ENCODE measurements at regions of chr7 and their contacts with region 1.

Region 1: GRCh38 chr7:127598318-127598717 is 4.8 kb downstream of the FSCN3 start:
- DNase-seq: no peak
- H3K4me3 ChIP-seq: no peak overlapping the region
- H3K27ac ChIP-seq: no peak overlapping the region
- H3K4me1 ChIP-seq: no peaks in the 10 kb centered on the region
- H3K27me3 ChIP-seq: no peaks in the 10 kb centered on the region
- CTCF ChIP-seq: peak in 2 of 6 experiments; percentile 14 to 20
- POLR2A ChIP-seq: no peak

Region 2: DNA sequence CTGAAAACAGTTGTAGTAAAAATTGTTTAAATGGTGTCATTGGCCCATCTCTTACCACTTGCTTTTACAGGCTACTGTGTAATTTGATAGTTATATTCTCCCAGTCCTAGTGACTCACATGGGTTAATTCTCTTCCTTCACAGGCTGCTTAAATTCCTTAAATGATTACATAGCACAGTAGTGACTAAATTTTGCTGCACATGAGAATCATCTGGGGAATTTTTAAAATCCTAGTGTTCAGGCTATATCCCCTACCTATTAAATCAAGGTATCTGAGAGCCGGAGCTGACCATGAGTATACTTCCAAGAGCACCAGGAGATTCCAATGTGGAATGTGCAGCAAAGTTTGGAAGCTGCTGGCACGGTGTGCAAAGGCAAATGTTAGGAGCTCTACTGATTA is 160.5 kb before region 1 on chr7:
- intact Hi-C with region 1: no loop called
- DNase-seq: no peak
- H3K4me3 ChIP-seq: no peak overlapping the region
- H3K27ac ChIP-seq: no peak overlapping the region
- H3K4me1 ChIP-seq: no peaks in the 10 kb centered on the region
- H3K27me3 ChIP-seq: no peaks in the 10 kb centered on the region
- CTCF ChIP-seq: no peak
- POLR2A ChIP-seq: no peak

Region 3: DNA sequence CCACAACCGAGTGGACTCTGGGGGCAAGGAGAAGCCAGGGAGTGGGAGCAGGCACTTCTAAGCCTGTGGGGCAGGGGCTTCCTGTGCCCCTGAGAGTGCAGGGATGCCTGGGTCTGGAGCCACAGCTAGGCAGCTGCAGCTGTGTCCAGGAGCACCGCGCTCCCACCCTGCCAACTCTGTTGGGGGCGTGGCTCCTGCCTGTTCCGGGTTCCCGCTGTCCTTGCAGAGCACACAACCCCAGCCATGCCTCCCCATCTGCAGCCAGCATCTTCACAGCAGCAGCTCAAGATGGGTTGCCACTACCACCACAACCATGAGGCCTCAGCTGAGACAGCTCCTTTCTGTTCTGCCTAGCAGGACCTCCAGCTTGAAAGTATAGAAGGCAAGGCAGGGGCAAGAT is 11.0 kb after region 1 on chr7:
- intact Hi-C with region 1: loop called in 1 of 2 experiments (anchors 1 kb)
- DNase-seq: no peak
- H3K4me3 ChIP-seq: no peak overlapping the region
- H3K27ac ChIP-seq: no peak overlapping the region
- H3K4me1 ChIP-seq: no peaks in the 10 kb centered on the region
- H3K27me3 ChIP-seq: no peaks in the 10 kb centered on the region
- CTCF ChIP-seq: no peak
- POLR2A ChIP-seq: no peak

Region 4: DNA sequence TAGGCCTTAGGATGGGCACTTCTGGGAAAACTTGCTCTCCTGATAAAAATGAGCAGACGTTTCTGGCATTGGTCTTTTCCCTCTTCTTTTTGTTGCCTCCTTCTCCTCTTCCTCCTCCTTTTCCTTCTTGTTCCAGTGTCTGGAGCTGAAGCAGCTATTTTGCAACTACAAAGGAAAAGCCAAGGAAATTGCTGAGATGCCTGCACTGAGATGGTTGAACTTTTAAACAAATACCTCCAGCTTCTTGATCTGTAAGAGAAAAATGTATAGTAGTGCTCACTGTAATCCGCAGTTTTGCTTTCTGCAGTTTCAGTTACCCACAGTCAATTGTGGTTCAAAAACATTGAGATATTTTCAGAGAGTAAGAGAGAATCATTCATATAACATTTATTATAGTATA is 46.2 kb after region 1 on chr7:
- intact Hi-C with region 1: loop called in 1 of 2 experiments (anchors 10 kb)
- DNase-seq: no peak
- H3K4me3 ChIP-seq: no peak overlapping the region
- H3K27ac ChIP-seq: no peak overlapping the region
- H3K4me1 ChIP-seq: no peaks in the 10 kb centered on the region
- H3K27me3 ChIP-seq: no peaks in the 10 kb centered on the region
- CTCF ChIP-seq: no peak
- POLR2A ChIP-seq: no peak

Region 5: DNA sequence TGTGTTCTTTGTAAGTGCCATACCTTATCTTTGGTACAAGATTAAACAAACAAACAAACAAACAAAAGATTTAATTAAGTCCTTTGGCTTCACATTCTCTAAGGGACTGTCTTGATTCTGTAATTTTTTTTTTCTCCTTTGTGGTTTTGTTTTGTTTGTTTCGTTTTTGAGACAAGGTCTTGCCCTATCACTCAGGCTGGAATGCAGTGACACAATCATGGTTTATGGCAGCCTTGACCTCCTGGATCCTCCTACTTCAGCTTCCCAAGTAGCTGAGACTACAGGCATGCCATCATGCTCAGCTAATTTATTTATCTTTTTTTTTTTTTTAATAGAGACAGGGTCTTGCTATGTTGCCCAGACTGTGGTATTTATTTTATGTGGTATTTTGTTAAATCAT is 267.1 kb after region 1 on chr7:
- intact Hi-C with region 1: no loop called
- DNase-seq: peak; percentile 41 to 93 (median 76)
- H3K4me3 ChIP-seq: no peak overlapping the region
- H3K27ac ChIP-seq: peak overlapping the region in 4 of 5 donors; percentile 27 to 63 (median 47)
- H3K4me1 ChIP-seq: peaks cover 7 to 14% of the 10 kb centered on the region in 2 donors
- H3K27me3 ChIP-seq: no peaks in the 10 kb centered on the region
- CTCF ChIP-seq: no peak
- POLR2A ChIP-seq: no peak